ENCODE measurements at regions of chr16 and their contacts with region 1.

Region 1: GRCh38 chr16:81077076-81077940 is at the start of gene C16orf46:
- DNase-seq: peak; percentile 97 to 100 (median 99)

Region 2: DNA sequence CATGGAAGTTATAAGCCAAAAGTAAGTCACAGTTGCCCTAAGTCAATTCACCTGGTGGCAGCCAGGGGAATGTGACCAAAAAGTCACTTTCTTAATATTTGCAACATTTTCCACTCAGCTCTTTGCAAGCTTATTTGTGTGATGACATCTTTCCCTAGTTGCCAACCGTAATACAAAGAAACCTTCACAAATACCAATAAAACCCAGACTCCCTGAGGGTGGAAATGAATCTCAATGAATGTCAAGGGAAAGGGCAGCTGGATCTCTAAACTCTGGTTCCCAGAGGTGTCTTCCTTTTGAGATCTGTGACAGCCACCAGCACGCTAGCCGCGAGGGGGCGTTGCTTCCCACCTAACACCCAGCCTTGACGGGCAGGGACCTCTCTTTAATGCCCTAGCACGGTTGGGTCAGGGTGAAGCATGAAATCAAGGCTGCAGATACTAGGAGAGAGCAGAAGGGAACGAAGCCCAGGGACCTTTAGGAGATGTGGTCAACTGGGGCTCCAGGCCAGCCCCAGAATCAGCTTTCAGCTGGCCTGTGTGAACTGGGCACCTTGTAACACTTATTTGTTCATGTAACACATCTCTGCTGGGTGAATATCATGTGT is 152.8 kb before region 1 on chr16:
- intact Hi-C with region 1: no loop called
- DNase-seq: peak in 38 of 42 donors; percentile 6 to 82 (median 47)

Region 3: GRCh38 chr16:81006814-81007696 is 70.3 kb before region 1 on chr16 and contains the starts of genes CENPN and CMC2:
- intact Hi-C with region 1: loop called (anchors 10 kb)
- DNase-seq: peak; percentile 97 to 99 (median 98)

Region 4: GRCh38 chr16:81035398-81035974 is 41.8 kb before region 1 on chr16 and contains the start of gene ATMIN:
- intact Hi-C with region 1: loop called (anchors 5 kb)
- DNase-seq: peak; percentile 32 to 92 (median 84)

Measured in head of caudate nucleus (tissue), 42 donors.